Sigmoid colon (tissue), 7 donors: ENCODE measurements at regions of chr9 and their contacts with region 1.

Region 1: DNA sequence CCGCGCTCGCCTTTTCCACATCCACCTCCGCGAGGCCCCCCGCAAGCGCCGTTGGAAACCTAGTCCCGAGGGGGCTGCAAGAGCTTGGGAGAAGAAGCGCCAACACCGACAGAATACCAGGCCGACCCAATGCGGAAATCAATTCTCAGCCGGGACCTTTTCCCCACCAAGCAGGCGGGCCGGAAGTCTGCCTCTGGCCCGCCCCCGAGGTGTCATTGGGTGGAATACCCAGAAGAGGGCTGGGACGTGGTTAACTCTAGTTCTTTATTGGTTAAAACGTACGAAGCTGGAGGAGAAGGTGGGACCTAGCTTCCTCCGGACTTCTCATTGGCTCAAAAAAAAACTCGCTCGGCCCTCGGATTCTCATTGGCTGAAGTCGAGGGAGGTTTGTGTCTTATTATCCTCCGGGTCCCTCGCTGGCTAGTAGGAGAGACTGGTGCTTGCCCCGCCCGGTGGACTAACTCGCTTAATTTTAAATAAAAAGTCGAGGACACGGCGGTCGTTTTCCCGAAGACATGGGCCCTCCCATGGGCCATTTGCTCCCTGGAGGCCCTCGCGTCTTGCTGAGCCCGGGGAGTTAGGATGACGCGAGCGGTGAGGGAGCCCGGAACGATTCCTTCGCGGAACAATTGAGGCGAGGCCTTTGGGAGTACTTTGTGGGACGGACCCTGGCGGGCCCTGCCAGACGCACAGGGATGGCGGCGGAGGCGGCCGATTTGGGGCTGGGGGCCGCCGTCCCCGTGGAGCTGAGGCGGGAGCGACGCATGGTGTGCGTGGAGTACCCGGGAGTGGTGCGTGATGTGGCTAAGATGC is at the start of gene GTF3C5:
- DNase-seq: peak; percentile 96
- H3K4me3 ChIP-seq: peak within 1 kb of the TSS; percentile 72 to 97 (median 88)
- H3K27ac ChIP-seq: peak within 1 kb of the TSS; percentile 87 to 91 (median 90)
- H3K4me1 ChIP-seq: peaks cover 0 to 41% (median 33%) of the 10 kb centered on the region in 4 donors
- H3K27me3 ChIP-seq: no peaks in the 10 kb centered on the region
- CTCF ChIP-seq: peak in 1 of 4 experiments; percentile 16
- EP300 ChIP-seq: no peak
- POLR2A ChIP-seq: peak; percentile 30 to 76
- total RNA-seq, gene GTF3C5: 42.0 to 49.6 (median 47.2) TPM

Region 2: GRCh38 chr9:132944302-132945185 is 86.0 kb before region 1 on chr9 and contains the start of gene TSC1:
- intact Hi-C with region 1: loop called (anchors 5 kb)
- DNase-seq: peak; percentile 98
- H3K4me3 ChIP-seq: peak within 1 kb of the TSS; percentile 94 to 100 (median 99)
- H3K27ac ChIP-seq: peak within 1 kb of the TSS; percentile 94 to 95 (median 94)
- H3K4me1 ChIP-seq: peaks cover 0 to 26% (median 23%) of the 10 kb centered on the region in 4 donors
- H3K27me3 ChIP-seq: no peaks in the 10 kb centered on the region
- CTCF ChIP-seq: no peak
- EP300 ChIP-seq: peak in 3 of 4 donors; percentile 16 to 67 (median 43)
- POLR2A ChIP-seq: peak; percentile 33 to 36
- total RNA-seq, gene TSC1: 35.3 to 55.9 (median 36.4) TPM

Region 3: DNA sequence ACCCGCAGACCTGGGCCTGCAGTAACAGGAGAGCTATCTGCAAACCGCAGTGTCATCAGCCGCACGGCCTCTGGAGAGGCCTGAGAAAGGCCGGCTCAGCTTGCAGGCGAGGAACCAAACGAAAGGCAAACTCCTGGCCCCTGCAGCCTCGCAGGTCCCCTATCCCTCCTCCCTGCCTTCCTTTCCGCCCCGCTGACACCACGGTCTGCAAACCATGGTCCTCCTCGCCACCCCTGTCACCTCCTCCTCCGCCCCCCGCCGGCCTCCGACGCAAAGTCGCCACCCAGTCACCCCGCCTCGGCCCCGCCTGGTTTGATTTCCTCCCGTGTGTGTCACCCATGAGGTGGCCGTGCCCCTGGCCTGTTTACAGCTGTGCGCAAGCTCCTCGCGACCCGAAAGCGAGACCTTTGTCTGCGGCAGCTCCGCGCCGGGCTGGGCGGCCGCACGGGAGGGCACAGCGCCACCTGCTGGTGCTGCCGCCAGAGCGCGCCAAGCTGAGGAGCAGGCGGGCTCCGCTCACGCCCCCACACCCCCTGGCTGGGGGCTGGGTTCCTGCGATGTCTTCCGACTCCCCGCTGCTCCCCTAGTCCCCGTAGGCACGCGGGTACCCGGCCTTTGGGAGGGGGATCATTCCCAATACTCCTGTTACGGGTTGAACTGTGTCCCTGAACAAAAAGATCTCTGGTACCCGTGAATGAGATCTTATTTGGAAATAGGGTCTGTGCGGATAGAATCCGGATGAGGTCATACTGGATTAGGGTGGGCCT is 113.8 kb after region 1 on chr9:
- intact Hi-C with region 1: loop called (anchors 2 kb)
- DNase-seq: peak; percentile 88
- H3K4me3 ChIP-seq: peak overlapping the region in 3 of 4 donors; percentile 47 to 53 (median 48)
- H3K27ac ChIP-seq: peak overlapping the region; percentile 45 to 68 (median 55)
- H3K4me1 ChIP-seq: peaks cover 0 to 74% (median 57%) of the 10 kb centered on the region in 4 donors
- H3K27me3 ChIP-seq: no peaks in the 10 kb centered on the region
- CTCF ChIP-seq: peak; percentile 92 to 99 (median 96)
- EP300 ChIP-seq: no peak
- POLR2A ChIP-seq: peak in 1 of 2 donors; percentile 12